ENCODE measurements at regions of chr7 and their contacts with region 1.

Region 1: GRCh38 chr7:94969434-94970084 is 62.2 kb downstream of the PPP1R9A start:
- DNase-seq: no peak
- H3K4me3 ChIP-seq: no peak overlapping the region
- H3K27ac ChIP-seq: no peak overlapping the region
- H3K4me1 ChIP-seq: no peaks in the 10 kb centered on the region
- H3K27me3 ChIP-seq: no peaks in the 10 kb centered on the region
- CTCF ChIP-seq: no peak

Region 2: DNA sequence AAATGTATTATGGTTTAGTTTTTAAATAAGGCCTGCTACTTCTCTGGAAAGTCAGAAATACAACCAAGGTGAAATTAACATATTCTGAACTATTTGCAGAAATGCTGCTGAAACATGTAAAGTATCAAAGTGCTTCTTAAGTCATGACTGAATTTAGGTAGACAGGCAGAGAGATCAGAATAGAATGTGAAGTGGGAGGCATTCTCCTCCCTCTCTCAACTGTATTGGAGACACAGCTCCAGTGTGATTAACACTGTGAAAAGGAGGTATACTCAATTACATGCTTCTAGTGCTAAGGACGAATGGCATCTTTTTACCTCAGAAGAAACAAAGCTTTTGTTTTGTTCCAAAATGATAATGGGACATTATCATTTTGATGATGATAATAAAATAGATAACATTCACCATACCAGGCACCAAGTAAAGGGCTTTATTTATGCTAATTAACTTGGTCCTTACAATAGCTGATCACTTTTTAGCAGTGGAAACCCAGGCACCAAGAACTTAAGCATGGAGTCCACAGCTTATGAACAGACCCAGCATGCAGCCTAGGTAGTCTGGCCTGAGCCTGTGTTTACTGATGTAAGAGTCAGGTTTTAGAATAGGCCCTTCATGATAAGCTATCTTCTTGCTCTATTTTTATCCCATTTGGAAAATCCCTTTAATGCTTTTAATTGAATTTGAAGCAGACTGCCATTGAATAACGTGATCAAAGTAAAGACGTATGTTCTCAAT is 36.1 kb before region 1 on chr7:
- CTCF ChIA-PET with region 1: no interaction called
- dilution Hi-C with region 1: loop called (anchors 5 kb)
- in situ Hi-C with region 1: no loop called
- intact Hi-C with region 1: no loop called
- DNase-seq: no peak
- H3K4me3 ChIP-seq: no peak overlapping the region
- H3K27ac ChIP-seq: no peak overlapping the region
- H3K4me1 ChIP-seq: no peaks in the 10 kb centered on the region
- H3K27me3 ChIP-seq: no peaks in the 10 kb centered on the region
- CTCF ChIP-seq: no peak